Pancreas (tissue), 10 donors: ENCODE measurements at regions of chr7 and their contacts with region 1.

Region 1: GRCh38 chr7:25851332-25852210 is 300.4 kb upstream of the NFE2L3 start:
- DNase-seq: peak; percentile 62 to 91 (median 79)
- ATAC-seq: peak; percentile 79 to 88 (median 84)
- H3K4me3 ChIP-seq: peak overlapping the region in 1 of 4 donors; percentile 27
- H3K27ac ChIP-seq: no peak overlapping the region
- H3K4me1 ChIP-seq: peaks cover 0 to 16% (median 7%) of the 10 kb centered on the region in 3 donors
- H3K27me3 ChIP-seq: peaks cover 3 to 36% (median 33%) of the 10 kb centered on the region in 4 donors
- CTCF ChIP-seq: peak; percentile 65 to 78 (median 76)

Region 2: GRCh38 chr7:25389489-25390106 is 462.0 kb before region 1 on chr7:
- intact Hi-C with region 1: loop called in 1 of 3 experiments (anchors 5 kb)
- DNase-seq: peak in 3 of 6 donors; percentile 20 to 36 (median 31)
- ATAC-seq: peak; percentile 31 to 68 (median 55)
- H3K4me3 ChIP-seq: no peak overlapping the region
- H3K27ac ChIP-seq: no peak overlapping the region
- H3K4me1 ChIP-seq: peaks cover 18 to 36% (median 34%) of the 10 kb centered on the region in 3 donors
- H3K27me3 ChIP-seq: no peaks in the 10 kb centered on the region
- CTCF ChIP-seq: peak in 3 of 4 donors; percentile 29 to 59 (median 42)

Region 3: GRCh38 chr7:25597946-25598345 is 253.6 kb before region 1 on chr7:
- intact Hi-C with region 1: loop called in 1 of 3 experiments (anchors 10 kb)
- DNase-seq: peak; percentile 65 to 78 (median 74)
- ATAC-seq: peak; percentile 95 to 98 (median 98)
- H3K4me3 ChIP-seq: no peak overlapping the region
- H3K27ac ChIP-seq: peak overlapping the region in 3 of 4 donors; percentile 42 to 73 (median 67)
- H3K4me1 ChIP-seq: peaks cover 7 to 12% (median 8%) of the 10 kb centered on the region in 3 donors
- H3K27me3 ChIP-seq: no peaks in the 10 kb centered on the region
- CTCF ChIP-seq: no peak

Region 4: DNA sequence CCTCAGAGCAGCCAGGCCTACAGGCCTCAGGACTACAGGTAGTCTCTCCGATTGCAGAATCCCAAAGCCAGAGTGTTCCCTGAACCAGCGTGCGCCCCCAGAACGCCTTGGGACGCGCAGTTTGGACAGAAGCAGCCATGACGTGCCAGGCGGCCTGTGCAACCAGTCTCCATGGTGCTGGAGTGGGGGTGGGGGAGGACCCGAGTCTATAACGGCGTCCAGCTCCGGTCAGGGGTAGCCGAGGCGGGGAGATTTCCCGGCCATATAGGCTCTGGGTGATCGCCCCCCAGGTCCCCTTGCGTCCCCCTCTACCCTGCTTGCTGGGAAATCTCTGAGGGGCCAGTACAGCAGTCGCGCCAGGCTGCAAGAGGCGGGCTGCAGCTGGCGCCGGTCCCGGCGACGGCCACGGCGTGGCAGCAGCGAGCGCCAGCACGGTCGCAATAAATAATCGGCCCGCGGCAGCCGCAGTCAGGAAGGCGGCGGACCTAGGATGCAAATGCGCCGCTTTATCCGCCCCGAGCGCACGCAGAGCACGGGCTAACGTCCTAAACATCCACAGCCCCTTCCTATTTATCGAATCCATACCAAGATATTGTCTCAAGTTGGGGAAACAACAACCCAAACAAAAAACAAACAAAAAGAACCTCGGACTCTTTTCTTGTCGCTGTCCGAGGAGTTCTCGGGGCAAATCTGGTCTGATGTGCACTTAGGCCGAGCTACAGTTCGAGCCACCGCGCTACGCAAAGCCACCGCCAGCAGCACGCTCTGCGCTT is 1299.2 kb after region 1 on chr7:
- intact Hi-C with region 1: loop called in 1 of 3 experiments (anchors 10 kb)
- DNase-seq: peak in 5 of 6 donors; percentile 36 to 86 (median 69)
- ATAC-seq: peak; percentile 78 to 90 (median 86)
- H3K4me3 ChIP-seq: peak overlapping the region in 2 of 4 donors; percentile 12 to 42
- H3K27ac ChIP-seq: no peak overlapping the region
- H3K4me1 ChIP-seq: peaks cover 0 to 12% (median 0%) of the 10 kb centered on the region in 3 donors
- H3K27me3 ChIP-seq: peaks cover 25 to 77% (median 33%) of the 10 kb centered on the region in 4 donors
- CTCF ChIP-seq: peak; percentile 61 to 80 (median 76)